ENCODE measurements at regions of chrX and their contacts with region 1.

Region 1: GRCh38 chrX:57821703-57822375 is 88.4 kb downstream of the ZXDA start:
- DNase-seq: peak; percentile 73
- H3K4me3 Mint-ChIP-seq: peak overlapping the region; percentile 38
- H3K27ac Mint-ChIP-seq: no peak overlapping the region
- H3K4me1 Mint-ChIP-seq: peaks cover 6% of the 10 kb centered on the region
- H3K27me3 Mint-ChIP-seq: peaks cover 39% of the 10 kb centered on the region
- CTCF ChIP-seq: peak; percentile 61

Region 2: GRCh38 chrX:57573754-57574153 is 248.1 kb before region 1 on chrX:
- CTCF ChIA-PET with region 1: interaction called, 3 read pairs
- POLR2A ChIA-PET with region 1: no interaction called
- intact Hi-C with region 1: loop called (anchors 5 kb)
- DNase-seq: peak; percentile 38
- H3K4me3 Mint-ChIP-seq: no peak overlapping the region
- H3K27ac Mint-ChIP-seq: no peak overlapping the region
- H3K4me1 Mint-ChIP-seq: no peaks in the 10 kb centered on the region
- H3K27me3 Mint-ChIP-seq: no peaks in the 10 kb centered on the region
- CTCF ChIP-seq: peak; percentile 45

Region 3: DNA sequence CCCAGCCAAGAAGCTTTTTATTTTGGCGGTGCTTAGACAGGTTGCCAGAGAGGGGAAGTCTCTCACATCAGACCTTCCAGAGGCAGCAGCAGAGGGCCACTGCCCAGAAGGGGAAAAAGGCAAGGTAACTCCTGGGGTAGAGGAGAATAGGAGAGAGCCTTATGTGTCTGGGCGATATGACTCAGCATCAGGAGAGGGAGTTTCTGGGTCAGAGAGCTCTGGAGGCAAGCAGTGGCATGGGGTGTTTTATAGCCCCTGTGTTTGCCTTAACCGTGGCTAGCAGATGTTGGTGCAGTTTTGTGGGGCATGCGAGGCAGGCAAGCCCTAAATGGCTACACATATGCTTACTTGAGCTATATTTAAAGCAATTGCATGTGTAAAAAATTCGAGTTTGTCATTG is 238.4 kb before region 1 on chrX:
- CTCF ChIA-PET with region 1: interaction called, 3 read pairs
- POLR2A ChIA-PET with region 1: no interaction called
- intact Hi-C with region 1: loop called (anchors 5 kb)
- DNase-seq: no peak
- H3K4me3 Mint-ChIP-seq: no peak overlapping the region
- H3K27ac Mint-ChIP-seq: no peak overlapping the region
- H3K4me1 Mint-ChIP-seq: no peaks in the 10 kb centered on the region
- H3K27me3 Mint-ChIP-seq: no peaks in the 10 kb centered on the region
- CTCF ChIP-seq: no peak

Region 4: GRCh38 chrX:57871463-57871862 is 49.6 kb after region 1 on chrX:
- CTCF ChIA-PET with region 1: no interaction called
- POLR2A ChIA-PET with region 1: no interaction called
- intact Hi-C with region 1: no loop called
- DNase-seq: no peak
- H3K4me3 Mint-ChIP-seq: no peak overlapping the region
- H3K27ac Mint-ChIP-seq: no peak overlapping the region
- H3K4me1 Mint-ChIP-seq: no peaks in the 10 kb centered on the region
- H3K27me3 Mint-ChIP-seq: no peaks in the 10 kb centered on the region
- CTCF ChIP-seq: no peak

Region 5: DNA sequence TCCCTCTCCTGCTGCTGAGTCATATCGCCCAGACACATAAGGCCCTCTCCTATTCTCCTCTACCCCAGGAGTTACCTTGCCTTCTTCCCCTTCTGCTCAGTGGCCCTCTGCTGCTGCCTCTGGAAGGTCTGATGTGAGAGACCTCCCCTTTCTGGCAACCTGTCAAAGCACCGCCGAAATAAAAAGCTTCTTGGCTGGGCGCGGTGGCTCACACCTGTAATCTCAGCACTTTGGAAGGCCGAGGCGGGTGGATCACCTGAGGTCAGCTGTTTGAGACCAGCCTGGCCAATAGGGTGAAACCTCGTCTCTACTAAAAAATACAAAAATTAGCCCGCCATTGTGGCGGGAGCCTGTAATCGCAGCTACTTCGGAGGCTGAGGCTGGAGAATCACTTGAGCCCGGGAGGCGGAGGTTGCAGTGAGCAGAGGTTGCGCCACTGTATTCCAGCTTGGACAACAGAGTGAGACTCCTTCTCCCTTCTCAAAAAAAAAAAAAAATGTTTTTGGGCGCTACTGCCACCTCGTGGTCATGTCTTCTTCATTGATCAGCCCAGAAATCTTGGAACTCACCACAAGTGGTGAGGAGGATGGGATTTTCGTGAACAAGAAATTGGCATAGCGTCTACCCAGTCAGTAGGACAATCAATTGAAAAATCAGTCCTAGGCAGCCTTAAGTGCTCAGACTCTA is 97.1 kb after region 1 on chrX:
- CTCF ChIA-PET with region 1: interaction called, 34 read pairs
- POLR2A ChIA-PET with region 1: no interaction called
- intact Hi-C with region 1: loop called (anchors 1 kb)
- DNase-seq: peak; percentile 55
- H3K4me3 Mint-ChIP-seq: no peak overlapping the region
- H3K27ac Mint-ChIP-seq: no peak overlapping the region
- H3K4me1 Mint-ChIP-seq: no peaks in the 10 kb centered on the region
- H3K27me3 Mint-ChIP-seq: peaks cover 45% of the 10 kb centered on the region
- CTCF ChIP-seq: peak; percentile 37

Region 6: GRCh38 chrX:57929373-57929772 is 107.5 kb after region 1 on chrX:
- CTCF ChIA-PET with region 1: interaction called, 62 read pairs
- POLR2A ChIA-PET with region 1: no interaction called
- intact Hi-C with region 1: loop called (anchors 1 kb)
- DNase-seq: peak; percentile 40
- H3K4me3 Mint-ChIP-seq: no peak overlapping the region
- H3K27ac Mint-ChIP-seq: no peak overlapping the region
- H3K4me1 Mint-ChIP-seq: peaks cover 5% of the 10 kb centered on the region
- H3K27me3 Mint-ChIP-seq: peaks cover 14% of the 10 kb centered on the region
- CTCF ChIP-seq: peak; percentile 33

Region 7: DNA sequence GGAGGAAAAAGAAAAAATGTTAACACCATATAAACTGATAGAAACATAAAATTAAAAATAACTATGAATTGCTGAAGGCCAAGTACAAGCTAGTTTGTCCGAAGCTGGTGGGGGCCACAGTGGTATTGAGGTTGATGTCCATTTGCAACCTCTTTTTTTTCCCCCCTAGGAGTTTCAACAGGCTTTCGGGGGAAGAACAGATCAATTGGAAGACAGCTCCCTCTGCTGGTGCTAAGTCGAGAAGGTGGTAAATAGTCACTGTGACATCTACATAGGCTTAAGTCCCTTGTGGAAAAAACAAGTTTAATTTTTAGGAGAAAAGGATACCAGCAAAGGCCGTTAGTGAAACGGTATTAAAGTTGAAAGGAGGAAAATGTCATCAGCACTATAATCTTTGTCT is 204.1 kb after region 1 on chrX:
- CTCF ChIA-PET with region 1: interaction called, 63 read pairs
- POLR2A ChIA-PET with region 1: no interaction called
- intact Hi-C with region 1: loop called (anchors 1 kb)
- DNase-seq: peak; percentile 52
- H3K4me3 Mint-ChIP-seq: no peak overlapping the region
- H3K27ac Mint-ChIP-seq: no peak overlapping the region
- H3K4me1 Mint-ChIP-seq: no peaks in the 10 kb centered on the region
- H3K27me3 Mint-ChIP-seq: peaks cover 16% of the 10 kb centered on the region
- CTCF ChIP-seq: peak; percentile 53

Measured in MCF 10A (cell line).